Endothelial cell of umbilical vein (primary cell): ENCODE measurements at regions of chr2 and their contacts with region 1.

Region 1: DNA sequence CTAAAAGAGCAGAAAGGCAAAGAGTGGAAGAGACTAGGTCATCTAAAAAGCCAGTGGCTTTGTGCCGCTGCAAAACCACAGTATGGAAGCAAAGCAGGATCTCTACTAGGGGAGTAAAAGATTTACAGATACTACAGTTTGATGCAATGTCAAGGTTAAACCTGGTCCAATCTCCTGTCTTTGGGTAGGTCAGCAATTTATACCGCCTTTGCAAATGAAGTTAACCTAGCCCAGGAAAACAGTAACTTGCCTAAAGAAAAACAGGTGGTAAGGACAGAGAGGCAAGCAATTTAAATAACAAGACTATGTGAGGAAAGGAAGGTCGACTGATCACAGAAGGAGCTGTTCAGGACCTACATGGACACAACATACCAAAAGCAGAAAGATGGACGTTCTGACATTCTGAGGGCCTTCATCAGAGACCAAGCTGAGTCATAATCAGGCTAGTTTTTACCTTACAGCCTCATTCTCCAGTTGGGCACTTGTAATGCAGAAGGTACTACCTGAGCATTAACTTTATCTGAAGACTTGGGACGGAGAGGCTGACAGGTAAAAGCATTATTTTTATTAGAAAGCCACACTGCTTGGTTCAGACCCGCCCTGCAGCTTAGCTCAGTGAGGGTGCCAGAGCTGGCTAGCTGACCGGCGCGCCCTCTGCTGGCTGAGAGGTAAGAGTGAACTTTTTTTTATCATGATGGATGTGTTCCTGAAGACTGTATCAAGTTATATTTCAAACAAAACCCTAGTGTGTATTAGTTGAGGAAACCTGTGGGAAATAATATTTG is 15.9 kb downstream of the CDKL4 start:
- DNase-seq: peak; percentile 81
- H3K4me3 ChIP-seq: peak overlapping the region in 1 of 3 experiments; percentile 49
- H3K27ac ChIP-seq: no peak overlapping the region
- H3K4me1 ChIP-seq: peaks cover 14% of the 10 kb centered on the region
- H3K27me3 ChIP-seq: no peaks in the 10 kb centered on the region
- CTCF ChIP-seq: peak; percentile 78 to 90
- POLR2A ChIP-seq: no peak

Region 2: DNA sequence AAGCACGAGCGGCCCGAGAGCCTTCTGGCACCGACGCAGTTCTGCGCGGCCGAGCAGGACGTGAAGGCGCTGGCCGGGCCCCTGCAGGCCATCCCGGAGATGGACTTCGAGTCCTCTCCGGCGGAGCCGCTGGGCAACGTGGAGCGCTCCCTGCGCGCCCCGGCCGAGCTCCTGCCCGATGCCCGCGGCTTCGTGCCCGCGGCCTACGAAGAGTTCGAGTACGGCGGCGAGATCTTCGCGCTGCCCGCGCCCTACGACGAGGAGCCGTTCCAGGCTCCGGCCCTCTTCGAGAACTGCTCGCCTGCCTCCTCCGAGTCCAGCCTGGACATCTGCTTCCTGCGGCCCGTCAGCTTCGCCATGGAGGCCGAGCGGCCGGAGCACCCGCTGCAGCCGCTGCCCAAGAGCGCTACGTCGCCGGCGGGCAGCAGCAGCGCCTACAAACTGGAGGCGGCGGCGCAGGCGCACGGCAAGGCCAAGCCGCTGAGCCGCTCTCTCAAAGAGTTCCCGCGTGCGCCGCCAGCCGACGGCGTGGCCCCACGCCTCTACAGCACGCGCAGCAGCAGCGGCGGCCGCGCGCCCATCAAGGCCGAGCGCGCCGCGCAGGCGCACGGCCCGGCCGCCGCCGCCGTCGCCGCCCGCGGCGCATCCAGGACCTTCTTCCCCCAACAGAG is 267.7 kb before region 1 on chr2:
- CTCF ChIA-PET with region 1: interaction called, 10 read pairs
- POLR2A ChIA-PET with region 1: no interaction called
- dilution Hi-C with region 1: no loop called
- intact Hi-C with region 1: loop called (anchors 5 kb)
- DNase-seq: peak; percentile 89
- H3K4me3 ChIP-seq: peak overlapping the region in 2 of 3 experiments; percentile 24 to 34
- H3K27ac ChIP-seq: no peak overlapping the region
- H3K4me1 ChIP-seq: peaks cover 4% of the 10 kb centered on the region
- H3K27me3 ChIP-seq: peaks cover 4 to 9% of the 10 kb centered on the region in 2 experiments
- CTCF ChIP-seq: no peak
- POLR2A ChIP-seq: no peak

Region 3: DNA sequence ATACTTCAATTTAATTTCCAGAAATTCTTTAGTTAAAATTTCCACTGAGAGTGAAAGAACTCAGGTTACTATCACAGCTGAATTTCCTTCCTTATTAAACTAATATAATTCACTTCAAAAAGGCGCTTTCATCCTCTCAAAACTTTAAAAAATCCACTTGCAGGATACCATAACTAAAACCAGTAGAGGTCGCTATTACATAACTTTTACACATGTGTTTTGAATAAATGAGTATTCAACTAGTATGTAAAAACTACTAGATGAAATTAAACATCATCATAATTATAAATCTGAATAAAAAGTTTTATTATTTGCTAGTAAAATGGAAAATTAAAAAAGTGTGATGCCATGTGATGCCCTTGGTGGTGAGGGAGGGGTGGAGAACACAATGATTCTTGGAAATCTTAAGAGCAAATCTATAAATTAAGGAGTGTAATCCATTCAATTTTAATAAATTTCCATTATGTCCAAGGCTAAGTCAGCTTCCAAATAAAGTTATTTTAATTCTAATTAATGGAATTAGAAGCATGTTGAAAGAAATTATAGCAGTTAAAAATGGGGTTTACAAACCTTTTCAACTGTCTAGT is 168.4 kb before region 1 on chr2:
- CTCF ChIA-PET with region 1: interaction called, 232 read pairs
- POLR2A ChIA-PET with region 1: no interaction called
- dilution Hi-C with region 1: loop called (anchors 25 kb)
- intact Hi-C with region 1: loop called (anchors 1 kb)
- DNase-seq: peak; percentile 60
- H3K4me3 ChIP-seq: no peak overlapping the region
- H3K27ac ChIP-seq: no peak overlapping the region
- H3K4me1 ChIP-seq: no peaks in the 10 kb centered on the region
- H3K27me3 ChIP-seq: no peaks in the 10 kb centered on the region
- CTCF ChIP-seq: peak; percentile 14 to 41
- POLR2A ChIP-seq: no peak

Region 4: GRCh38 chr2:39124000-39124745 is 103.6 kb before region 1 on chr2:
- CTCF ChIA-PET with region 1: interaction called, 53 read pairs
- POLR2A ChIA-PET with region 1: no interaction called
- dilution Hi-C with region 1: no loop called
- intact Hi-C with region 1: loop called (anchors 1 kb)
- DNase-seq: peak; percentile 97
- H3K4me3 ChIP-seq: peak overlapping the region; percentile 53 to 96 (median 89)
- H3K27ac ChIP-seq: peak overlapping the region; percentile 45
- H3K4me1 ChIP-seq: peaks cover 18% of the 10 kb centered on the region
- H3K27me3 ChIP-seq: no peaks in the 10 kb centered on the region
- CTCF ChIP-seq: peak; percentile 28 to 86
- POLR2A ChIP-seq: peak; percentile 96

Region 5: DNA sequence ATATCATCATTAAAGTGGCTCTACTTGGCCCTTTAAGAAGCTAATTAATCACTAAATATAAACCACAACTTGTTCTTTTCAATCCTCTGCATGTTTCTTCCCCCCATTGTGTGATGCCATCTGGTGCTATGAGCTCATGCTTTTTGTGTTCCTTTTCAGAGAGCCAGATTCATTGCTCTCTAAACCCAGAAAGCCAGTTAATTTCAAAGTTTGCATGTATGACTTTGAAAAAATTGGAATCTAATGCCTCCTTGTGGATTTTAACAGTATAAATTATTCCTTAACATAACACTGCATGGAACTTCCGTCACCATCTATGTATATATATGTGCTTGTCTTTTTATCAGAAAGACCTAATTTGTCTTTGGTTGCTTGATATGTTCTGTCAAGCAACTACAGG is 469.0 kb after region 1 on chr2:
- CTCF ChIA-PET with region 1: interaction called, 15 read pairs
- POLR2A ChIA-PET with region 1: no interaction called
- dilution Hi-C with region 1: no loop called
- intact Hi-C with region 1: no loop called
- DNase-seq: peak; percentile 84
- H3K4me3 ChIP-seq: no peak overlapping the region
- H3K27ac ChIP-seq: peak overlapping the region; percentile 13
- H3K4me1 ChIP-seq: peaks cover 18% of the 10 kb centered on the region
- H3K27me3 ChIP-seq: no peaks in the 10 kb centered on the region
- CTCF ChIP-seq: peak in 1 of 2 donors; percentile 17
- POLR2A ChIP-seq: no peak

Region 6: DNA sequence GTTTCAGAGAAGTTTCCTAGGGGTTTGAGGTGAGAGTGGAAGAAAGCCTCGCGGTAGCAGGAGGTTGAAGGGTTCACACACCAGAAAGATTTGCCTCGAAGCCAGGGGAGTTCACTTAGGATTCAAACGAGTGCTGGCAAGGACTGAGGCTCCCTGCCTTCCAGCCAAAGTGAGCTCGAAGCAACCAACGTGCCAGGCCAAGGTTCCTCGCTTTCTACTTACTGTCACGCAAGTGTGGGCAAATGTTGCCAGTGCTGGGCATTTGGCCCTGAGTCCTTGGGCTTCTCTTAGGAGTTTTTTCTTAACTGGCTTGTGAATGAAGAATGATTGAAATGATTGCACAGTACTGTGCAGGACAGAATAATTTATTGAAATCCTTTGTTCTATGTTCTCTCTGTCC is 491.5 kb after region 1 on chr2:
- CTCF ChIA-PET with region 1: no interaction called
- POLR2A ChIA-PET with region 1: no interaction called
- dilution Hi-C with region 1: no loop called
- intact Hi-C with region 1: no loop called
- DNase-seq: no peak
- H3K4me3 ChIP-seq: no peak overlapping the region
- H3K27ac ChIP-seq: no peak overlapping the region
- H3K4me1 ChIP-seq: no peaks in the 10 kb centered on the region
- H3K27me3 ChIP-seq: peaks cover 8 to 12% of the 10 kb centered on the region in 2 experiments
- CTCF ChIP-seq: no peak
- POLR2A ChIP-seq: no peak